ENCODE measurements at regions of chr2 and their contacts with region 1.

Region 1: DNA sequence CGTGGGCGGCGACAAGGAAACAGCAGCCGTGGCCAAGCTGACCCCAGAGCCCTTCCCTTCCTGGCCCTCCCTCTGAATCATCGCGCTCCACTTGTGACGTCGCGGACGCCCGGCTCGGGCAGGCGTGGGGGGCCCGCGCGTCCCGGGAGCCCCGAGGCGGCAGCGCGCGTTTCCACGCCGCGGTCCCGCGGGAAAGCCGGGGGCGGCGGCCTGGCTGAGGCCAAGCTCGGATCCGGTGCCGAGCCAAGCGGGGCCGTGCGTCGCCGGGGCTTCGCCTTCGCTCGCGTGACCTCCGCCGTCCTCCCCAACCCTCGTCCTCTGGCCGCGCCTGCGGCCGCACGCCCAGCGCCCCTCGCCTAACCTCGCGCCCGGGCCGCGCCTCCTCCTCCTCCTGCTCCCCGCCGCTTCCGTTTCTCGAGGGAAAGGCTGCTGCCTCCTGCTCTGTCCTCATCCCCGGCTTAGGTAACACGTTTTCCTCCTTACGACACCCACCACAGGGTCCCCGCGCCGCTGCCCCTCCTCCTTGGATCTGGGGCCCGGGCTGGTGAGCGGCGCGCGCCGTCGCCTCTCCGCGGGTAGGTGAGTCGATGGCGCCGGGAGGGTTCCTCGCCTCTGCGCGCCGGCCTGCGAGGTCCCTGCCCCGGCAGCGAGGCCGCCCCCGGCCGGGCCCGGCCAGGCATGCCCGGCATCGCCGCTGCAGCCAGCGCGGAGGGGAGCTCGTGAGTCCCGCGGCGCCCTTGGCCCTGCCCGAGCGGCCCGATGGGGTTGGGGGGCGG is at the start of gene INPP1:
- DNase-seq: peak; percentile 65
- ATAC-seq: peak; percentile 77
- H3K4me3 Mint-ChIP-seq: peak within 1 kb of the TSS; percentile 82
- H3K27ac Mint-ChIP-seq: peak within 1 kb of the TSS; percentile 67
- H3K4me1 Mint-ChIP-seq: peaks cover 18% of the 10 kb centered on the region
- H3K27me3 Mint-ChIP-seq: peaks cover 5% of the 10 kb centered on the region
- total RNA-seq, gene INPP1: 13.7 to 18.9 TPM

Region 2: GRCh38 chr2:190355980-190356644 is 12.4 kb after region 1 on chr2:
- CTCF ChIA-PET with region 1: interaction called, 13 read pairs
- DNase-seq: no peak
- ATAC-seq: no peak
- H3K4me3 Mint-ChIP-seq: no peak overlapping the region
- H3K27ac Mint-ChIP-seq: no peak overlapping the region
- H3K4me1 Mint-ChIP-seq: peaks cover 23% of the 10 kb centered on the region
- H3K27me3 Mint-ChIP-seq: no peaks in the 10 kb centered on the region